ENCODE measurements at regions of chr16 and their contacts with region 1.

Region 1: GRCh38 chr16:48385272-48386150 is at the start of gene SIAH1:
- DNase-seq: peak; percentile 71
- ATAC-seq: peak; percentile 69
- H3K4me3 ChIP-seq: peak within 1 kb of the TSS; percentile 85 to 91 (median 85)
- H3K27ac ChIP-seq: peak within 1 kb of the TSS; percentile 92
- H3K4me1 ChIP-seq: peaks cover 52% of the 10 kb centered on the region
- H3K27me3 ChIP-seq: no peaks in the 10 kb centered on the region; a peak in 2 of 5 replicates
- CTCF ChIP-seq: 0 out of 2 replicates have a peak, but pooled peaks have one; percentile 19
- EP300 ChIP-seq: no peak; a peak in 1 of 4 replicates
- POLR2A ChIP-seq: peak; percentile 86 to 94
- RAD21 ChIP-seq: peak; percentile 61; the same call in 1 of the 2 replicates
- total RNA-seq, gene SIAH1: 27.9 and 28.6 TPM in 2 replicates

Region 2: GRCh38 chr16:48081656-48082055 is 303.9 kb before region 1 on chr16:
- CTCF ChIA-PET with region 1: no interaction called
- POLR2A ChIA-PET with region 1: no interaction called
- in situ Hi-C with region 1: no loop called
- intact Hi-C with region 1: no loop called
- DNase-seq: no peak
- ATAC-seq: no peak; the same call in 2 of the 3 replicates
- H3K4me3 ChIP-seq: no peak overlapping the region
- H3K27ac ChIP-seq: no peak overlapping the region
- H3K4me1 ChIP-seq: peaks cover 7% of the 10 kb centered on the region
- H3K27me3 ChIP-seq: peaks cover 1 to 30% of the 10 kb centered on the region in 2 experiments; a peak in 2 of 5 replicates
- CTCF ChIP-seq: no peak
- EP300 ChIP-seq: no peak
- POLR2A ChIP-seq: no peak
- RAD21 ChIP-seq: no peak

Region 3: DNA sequence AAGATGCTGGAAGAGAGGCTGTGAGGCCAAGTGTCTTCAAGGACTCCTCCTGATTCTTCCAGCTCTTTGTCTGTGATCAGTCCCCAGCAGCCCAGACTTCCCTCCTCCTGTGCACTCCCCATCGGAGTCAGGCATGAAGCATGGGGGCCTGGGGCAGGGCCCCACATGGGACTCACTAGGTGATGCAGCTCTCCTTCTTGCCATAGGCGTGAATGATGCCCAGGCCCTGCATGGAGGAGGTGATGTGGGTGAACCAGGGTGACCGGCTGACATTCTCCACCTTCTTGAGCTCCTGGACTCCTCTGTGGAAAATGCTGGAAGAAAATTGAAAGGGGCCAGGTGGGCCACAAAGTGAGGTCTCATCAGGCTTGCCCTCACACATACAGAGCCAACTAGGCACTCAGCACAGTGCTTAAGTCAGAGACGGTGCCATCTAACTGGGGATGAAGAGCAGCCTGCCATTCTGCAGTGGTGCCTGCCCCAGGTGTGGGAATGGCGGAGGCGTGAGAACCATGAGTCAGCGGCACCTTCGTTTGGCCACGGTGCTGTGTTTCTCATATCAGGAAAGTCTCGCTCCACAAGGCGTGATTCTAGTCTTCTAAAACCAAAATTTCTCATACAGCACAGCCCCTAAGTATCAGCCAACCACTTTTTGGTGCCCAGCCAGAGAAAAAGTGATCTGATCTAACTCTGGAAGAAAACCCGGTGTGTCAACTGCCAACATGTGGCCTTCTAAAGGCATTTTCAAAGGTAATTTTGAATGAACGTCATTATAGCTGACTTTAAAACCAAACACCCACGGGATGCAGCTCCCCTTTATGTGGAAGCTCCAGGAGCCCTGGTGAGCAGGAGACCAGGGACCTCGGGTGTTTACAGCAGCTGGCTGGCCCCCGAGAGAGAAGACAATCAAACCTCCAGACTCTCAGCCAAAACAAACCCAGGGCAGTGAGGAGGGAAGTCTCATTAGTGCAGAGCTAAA is 284.5 kb before region 1 on chr16:
- CTCF ChIA-PET with region 1: no interaction called
- POLR2A ChIA-PET with region 1: no interaction called
- in situ Hi-C with region 1: no loop called
- intact Hi-C with region 1: no loop called
- DNase-seq: no peak
- ATAC-seq: no peak
- H3K4me3 ChIP-seq: no peak overlapping the region
- H3K27ac ChIP-seq: no peak overlapping the region
- H3K4me1 ChIP-seq: peaks cover 14% of the 10 kb centered on the region; the same call in 1 of the 2 replicates
- H3K27me3 ChIP-seq: peaks cover 0 to 27% of the 10 kb centered on the region in 2 experiments; a peak in 2 of 5 replicates
- CTCF ChIP-seq: no peak
- EP300 ChIP-seq: no peak
- POLR2A ChIP-seq: no peak
- RAD21 ChIP-seq: no peak

Region 4: GRCh38 chr16:48188449-48189102 is 196.9 kb before region 1 on chr16:
- CTCF ChIA-PET with region 1: no interaction called
- POLR2A ChIA-PET with region 1: no interaction called
- in situ Hi-C with region 1: no loop called
- intact Hi-C with region 1: no loop called
- DNase-seq: peak; percentile 75
- ATAC-seq: peak; percentile 46
- H3K4me3 ChIP-seq: no peak overlapping the region
- H3K27ac ChIP-seq: peak overlapping the region; percentile 6
- H3K4me1 ChIP-seq: peaks cover 37% of the 10 kb centered on the region
- H3K27me3 ChIP-seq: no peaks in the 10 kb centered on the region
- CTCF ChIP-seq: no peak
- EP300 ChIP-seq: peak in 1 of 2 experiments; percentile 87; a peak in 2 of 4 replicates
- POLR2A ChIP-seq: no peak
- RAD21 ChIP-seq: no peak

Region 5: DNA sequence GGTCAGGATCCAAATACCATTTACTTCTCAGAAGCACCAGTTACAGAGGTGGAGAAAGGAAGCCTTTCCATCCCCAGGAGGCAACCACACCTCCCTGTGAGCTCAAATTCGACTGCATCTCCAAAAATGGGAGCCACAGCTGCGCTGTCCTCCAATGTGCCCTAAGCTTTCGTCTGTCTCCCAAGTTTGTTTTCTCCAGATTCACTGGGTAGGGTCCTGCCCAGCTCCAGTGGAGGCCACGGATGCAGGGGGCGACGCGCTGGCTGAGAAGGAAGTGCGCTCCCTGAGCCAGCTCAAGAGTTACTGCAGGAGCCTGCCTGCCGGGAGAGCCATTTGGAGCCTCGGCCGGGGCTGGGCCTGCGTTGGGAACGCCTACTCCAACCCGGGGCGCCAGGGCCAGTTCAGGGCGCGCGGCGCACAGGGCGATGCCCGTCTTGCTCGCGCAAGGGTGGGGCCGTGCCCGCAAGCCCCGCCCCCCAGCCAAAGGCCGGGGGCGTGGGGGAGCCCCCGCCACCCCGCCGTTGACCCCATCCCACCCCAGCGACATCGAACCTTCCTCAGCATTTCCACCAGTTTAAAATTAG is 19.8 kb before region 1 on chr16:
- CTCF ChIA-PET with region 1: no interaction called
- POLR2A ChIA-PET with region 1: interaction called, 80 read pairs
- in situ Hi-C with region 1: no loop called
- intact Hi-C with region 1: loop called (anchors 1 kb)
- DNase-seq: peak; percentile 83
- ATAC-seq: peak; percentile 99
- H3K4me3 ChIP-seq: peak overlapping the region; percentile 72 to 87 (median 75)
- H3K27ac ChIP-seq: peak overlapping the region; percentile 81
- H3K4me1 ChIP-seq: peaks cover 45% of the 10 kb centered on the region
- H3K27me3 ChIP-seq: no peaks in the 10 kb centered on the region; a peak in 1 of 5 replicates
- CTCF ChIP-seq: peak; percentile 53
- EP300 ChIP-seq: no peak
- POLR2A ChIP-seq: peak; percentile 93 to 96
- RAD21 ChIP-seq: no peak

Region 6: GRCh38 chr16:48373258-48374029 is 12.1 kb before region 1 on chr16:
- CTCF ChIA-PET with region 1: no interaction called
- POLR2A ChIA-PET with region 1: interaction called, 20 read pairs
- in situ Hi-C with region 1: no loop called
- intact Hi-C with region 1: no loop called
- DNase-seq: no peak
- ATAC-seq: peak; percentile 36; the same call in 2 of the 3 replicates
- H3K4me3 ChIP-seq: no peak overlapping the region
- H3K27ac ChIP-seq: no peak overlapping the region
- H3K4me1 ChIP-seq: peaks cover 47% of the 10 kb centered on the region
- H3K27me3 ChIP-seq: no peaks in the 10 kb centered on the region
- CTCF ChIP-seq: no peak
- EP300 ChIP-seq: no peak
- POLR2A ChIP-seq: no peak
- RAD21 ChIP-seq: no peak

Region 7: GRCh38 chr16:48444574-48444973 is 59.1 kb after region 1 on chr16:
- CTCF ChIA-PET with region 1: no interaction called
- POLR2A ChIA-PET with region 1: interaction called, 7 read pairs
- in situ Hi-C with region 1: no loop called
- intact Hi-C with region 1: loop called (anchors 2 kb)
- DNase-seq: no peak
- ATAC-seq: no peak
- H3K4me3 ChIP-seq: no peak overlapping the region
- H3K27ac ChIP-seq: no peak overlapping the region
- H3K4me1 ChIP-seq: peaks cover 80% of the 10 kb centered on the region
- H3K27me3 ChIP-seq: no peaks in the 10 kb centered on the region
- CTCF ChIP-seq: no peak
- EP300 ChIP-seq: no peak
- POLR2A ChIP-seq: no peak
- RAD21 ChIP-seq: no peak

Region 8: DNA sequence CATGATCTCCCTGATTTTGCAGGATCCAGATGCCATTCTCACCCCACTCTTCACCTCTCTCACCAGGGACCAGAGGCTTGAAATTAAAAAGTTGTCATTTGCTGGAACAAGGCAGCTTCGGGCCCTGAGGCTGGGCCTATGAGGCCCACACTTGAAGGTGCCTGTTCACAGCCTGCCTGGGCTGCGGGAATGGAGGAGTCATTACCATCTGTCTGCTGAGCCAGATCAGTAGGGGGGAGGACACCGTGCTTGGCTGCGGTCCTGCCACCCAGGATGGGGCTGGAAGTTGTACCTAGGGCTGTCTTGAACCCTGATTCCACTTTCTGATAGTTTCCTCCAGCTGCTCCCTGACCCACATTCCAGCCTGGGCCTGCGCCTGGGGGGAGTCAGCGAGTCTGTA is 432.7 kb after region 1 on chr16:
- CTCF ChIA-PET with region 1: no interaction called
- POLR2A ChIA-PET with region 1: no interaction called
- in situ Hi-C with region 1: no loop called
- intact Hi-C with region 1: no loop called
- DNase-seq: no peak
- ATAC-seq: no peak
- H3K4me3 ChIP-seq: no peak overlapping the region
- H3K27ac ChIP-seq: no peak overlapping the region
- H3K4me1 ChIP-seq: no peaks in the 10 kb centered on the region
- H3K27me3 ChIP-seq: peaks cover 1 to 18% of the 10 kb centered on the region in 2 experiments; a peak in 2 of 5 replicates
- CTCF ChIP-seq: no peak
- EP300 ChIP-seq: no peak
- POLR2A ChIP-seq: no peak
- RAD21 ChIP-seq: no peak